ENCODE measurements at regions of chr1 and their contacts with region 1.

Region 1: GRCh38 chr1:204879351-204879750 is 8.7 kb downstream of the NFASC start:
- DNase-seq: no peak
- H3K4me3 ChIP-seq: no peak overlapping the region
- H3K27ac ChIP-seq: peak overlapping the region; percentile 32 to 72 (median 56)
- H3K4me1 ChIP-seq: peaks cover 18 to 84% (median 69%) of the 10 kb centered on the region in 4 donors
- H3K27me3 ChIP-seq: no peaks in the 10 kb centered on the region
- CTCF ChIP-seq: no peak
- EP300 ChIP-seq: no peak
- POLR2A ChIP-seq: no peak

Region 2: DNA sequence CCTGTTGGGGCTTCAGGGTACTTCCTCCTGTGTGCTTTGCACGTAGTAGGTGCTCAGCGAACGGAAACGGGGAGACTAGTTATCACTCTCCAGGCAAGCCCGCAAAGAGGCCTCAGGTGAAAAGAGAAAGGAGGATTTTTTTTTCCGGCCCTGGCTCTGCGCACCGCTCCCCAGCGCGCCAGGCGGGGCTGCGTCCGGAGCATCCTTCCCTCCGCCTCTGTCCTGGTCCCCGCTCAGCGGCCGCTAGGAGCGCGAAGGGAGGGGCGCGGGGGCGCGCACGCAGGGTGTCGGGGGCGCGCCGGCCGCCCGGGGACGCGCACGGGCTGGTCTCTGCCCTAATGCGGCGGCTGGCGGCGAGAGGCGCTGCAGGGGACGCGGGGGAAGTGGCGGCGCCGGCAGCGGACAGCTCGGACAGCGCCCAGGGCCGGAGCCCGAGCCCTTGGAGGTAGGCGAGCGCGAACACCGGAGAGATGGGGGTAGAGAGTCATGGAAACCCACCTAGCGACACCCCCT is 51.0 kb before region 1 on chr1:
- intact Hi-C with region 1: loop called (anchors 5 kb)
- DNase-seq: no peak
- H3K4me3 ChIP-seq: peak overlapping the region; percentile 66 to 71 (median 69)
- H3K27ac ChIP-seq: peak overlapping the region; percentile 78 to 90 (median 84)
- H3K4me1 ChIP-seq: peaks cover 12 to 67% (median 52%) of the 10 kb centered on the region in 4 donors
- H3K27me3 ChIP-seq: no peaks in the 10 kb centered on the region
- CTCF ChIP-seq: peak in 2 of 3 experiments; percentile 40 to 41
- EP300 ChIP-seq: no peak
- POLR2A ChIP-seq: peak; percentile 17

Measured in esophagus muscularis mucosa (tissue), 4 donors.